BJ (cell line): ENCODE measurements at regions of chr2 and their contacts with region 1.

Region 1: GRCh38 chr2:39227628-39228412 is 15.9 kb downstream of the CDKL4 start:
- DNase-seq: no peak
- H3K4me3 ChIP-seq: no peak overlapping the region
- H3K27me3 ChIP-seq: no peaks in the 10 kb centered on the region
- CTCF ChIP-seq: peak; percentile 91

Region 2: DNA sequence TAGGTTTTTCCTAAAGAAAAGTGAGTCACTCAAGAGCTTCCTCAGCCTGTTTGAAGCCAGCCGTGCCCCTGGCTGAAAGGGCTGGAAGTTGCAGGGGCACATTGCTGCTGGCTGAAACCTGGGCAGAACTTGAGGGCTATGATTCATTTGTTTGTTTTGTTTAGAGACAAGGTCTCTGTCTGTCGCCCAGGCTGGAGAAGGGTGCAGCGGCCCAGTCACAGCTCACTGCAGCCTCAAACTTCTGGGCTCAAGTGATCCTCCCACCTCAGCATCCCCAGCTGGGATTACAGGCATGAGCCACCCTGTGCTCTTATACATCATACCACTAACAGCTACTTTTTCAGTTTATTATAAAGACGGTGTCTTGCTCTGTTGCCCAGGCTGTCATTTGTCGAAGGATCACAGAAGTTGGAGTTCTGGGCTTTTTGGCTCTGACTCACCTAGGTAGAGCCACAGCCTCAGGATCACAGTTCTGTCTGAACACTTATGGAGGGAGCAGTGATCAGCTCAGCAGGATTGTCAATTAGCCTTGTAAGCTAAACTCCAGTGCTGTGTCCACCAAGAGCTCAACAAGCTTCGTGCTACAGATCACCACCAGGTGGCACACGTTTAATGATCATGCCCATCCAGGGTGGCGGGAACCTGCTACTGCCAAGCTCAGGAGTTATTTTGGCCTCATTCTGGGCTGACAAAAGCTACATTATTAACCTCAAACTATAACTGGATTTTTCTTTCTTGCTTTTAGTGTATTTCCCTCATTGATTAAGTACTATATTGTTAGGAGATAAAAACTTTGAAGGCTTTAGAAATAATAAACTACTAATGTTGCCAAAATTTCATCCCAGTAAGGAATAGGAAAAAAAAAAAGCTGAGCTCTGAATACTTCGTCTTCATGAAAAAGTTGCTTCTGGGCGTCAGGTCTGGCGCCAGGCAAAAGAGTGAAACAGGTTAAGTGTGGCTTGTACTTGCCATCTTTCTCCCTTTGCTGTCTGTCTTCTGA is 280.3 kb before region 1 on chr2:
- CTCF ChIA-PET with region 1: interaction called, 57 read pairs
- POLR2A ChIA-PET with region 1: interaction called, 3 read pairs
- DNase-seq: no peak
- H3K4me3 ChIP-seq: no peak overlapping the region
- H3K27me3 ChIP-seq: no peaks in the 10 kb centered on the region
- CTCF ChIP-seq: peak; percentile 67

Region 3: GRCh38 chr2:39059366-39059952 is 168.4 kb before region 1 on chr2:
- CTCF ChIA-PET with region 1: interaction called, 201 read pairs
- POLR2A ChIA-PET with region 1: interaction called, 5 read pairs
- DNase-seq: peak; percentile 10
- H3K4me3 ChIP-seq: no peak overlapping the region
- H3K27me3 ChIP-seq: no peaks in the 10 kb centered on the region
- CTCF ChIP-seq: peak; percentile 49

Region 4: DNA sequence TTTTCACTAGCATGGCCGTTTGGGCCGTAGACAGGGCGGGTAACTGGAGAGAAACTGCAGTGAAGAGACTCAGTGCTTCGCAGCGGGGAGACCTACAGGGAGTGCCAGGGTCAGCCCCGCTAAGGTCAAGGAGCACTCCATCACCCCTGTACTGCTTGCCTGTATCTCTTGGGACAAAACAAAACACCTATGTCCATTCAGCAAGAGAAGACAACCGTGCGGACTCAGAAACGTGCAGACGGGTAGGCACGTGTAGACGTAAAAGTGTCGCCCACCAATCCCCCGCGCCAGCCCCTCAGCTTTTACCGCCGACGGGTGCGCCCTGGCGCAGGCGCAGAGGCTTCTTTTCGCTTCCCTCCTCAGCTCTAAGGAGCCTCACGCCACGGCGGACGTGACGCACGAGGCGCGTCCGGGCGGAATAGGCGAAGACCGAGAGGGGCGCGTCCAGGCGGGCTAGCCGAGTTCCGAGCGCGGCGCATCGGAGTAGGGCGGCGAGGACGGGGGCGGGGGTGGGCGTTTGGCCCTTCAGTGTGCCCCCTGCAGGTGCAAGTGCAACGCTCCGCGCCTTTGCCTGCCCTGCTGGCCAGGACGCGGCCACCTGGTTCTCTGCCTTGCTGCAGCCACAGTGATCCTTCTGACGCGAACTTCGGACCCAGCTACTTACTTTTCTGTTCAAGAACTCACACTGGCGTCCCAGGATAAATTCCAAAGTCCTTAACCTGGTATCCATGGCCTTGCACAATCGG is 103.6 kb before region 1 on chr2:
- CTCF ChIA-PET with region 1: interaction called, 56 read pairs
- POLR2A ChIA-PET with region 1: no interaction called
- DNase-seq: peak; percentile 63
- H3K4me3 ChIP-seq: peak overlapping the region; percentile 75
- H3K27me3 ChIP-seq: no peaks in the 10 kb centered on the region
- CTCF ChIP-seq: peak; percentile 69

Region 5: DNA sequence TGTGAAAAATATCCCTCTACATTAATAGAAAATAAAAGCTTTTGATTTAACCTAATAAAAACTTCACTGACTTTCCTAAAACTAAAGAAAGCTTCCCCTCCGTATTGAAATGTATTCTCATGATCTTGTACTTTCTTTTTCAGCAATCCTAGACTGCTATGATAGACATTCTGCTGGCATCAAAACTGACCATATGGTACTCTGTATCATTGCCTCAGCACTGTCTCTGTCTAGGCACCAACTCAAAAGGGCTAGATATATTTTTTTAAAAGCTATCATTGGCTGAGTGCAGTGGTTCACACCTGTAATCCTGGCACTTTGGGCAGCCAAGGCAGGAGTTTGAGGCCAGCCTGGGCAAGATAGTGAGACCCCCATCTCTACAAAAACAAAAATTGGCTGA is 17.0 kb before region 1 on chr2:
- CTCF ChIA-PET with region 1: interaction called, 36 read pairs
- POLR2A ChIA-PET with region 1: no interaction called
- DNase-seq: no peak
- H3K4me3 ChIP-seq: no peak overlapping the region
- H3K27me3 ChIP-seq: no peaks in the 10 kb centered on the region
- CTCF ChIP-seq: no peak

Region 6: GRCh38 chr2:39216346-39217191 is 11.3 kb before region 1 on chr2:
- CTCF ChIA-PET with region 1: interaction called, 36 read pairs
- POLR2A ChIA-PET with region 1: no interaction called
- DNase-seq: no peak
- H3K4me3 ChIP-seq: no peak overlapping the region
- H3K27me3 ChIP-seq: no peaks in the 10 kb centered on the region
- CTCF ChIP-seq: no peak

Region 7: GRCh38 chr2:39431592-39432316 is 203.9 kb after region 1 on chr2:
- CTCF ChIA-PET with region 1: no interaction called
- POLR2A ChIA-PET with region 1: no interaction called
- DNase-seq: no peak
- H3K4me3 ChIP-seq: no peak overlapping the region
- H3K27me3 ChIP-seq: no peaks in the 10 kb centered on the region
- CTCF ChIP-seq: 0 out of 2 replicates have a peak, but pooled peaks have one; percentile 7